Dorsolateral prefrontal cortex (tissue), 120 donors: ENCODE measurements at regions of chr15 and their contacts with region 1.

Region 1: GRCh38 chr15:74835307-74835823 is 7.6 kb downstream of the ULK3 start:
- DNase-seq: peak in 3 of 10 donors; percentile 33 to 62 (median 34)
- H3K4me3 ChIP-seq: no peak overlapping the region
- H3K27ac ChIP-seq: no peak overlapping the region
- H3K27me3 ChIP-seq: no peaks in the 10 kb centered on the region
- CTCF ChIP-seq: peak; percentile 26 to 77 (median 64)

Region 2: GRCh38 chr15:74620636-74621545 is 214.5 kb before region 1 on chr15:
- intact Hi-C with region 1: loop called in 1 of 2 experiments (anchors 10 kb)
- DNase-seq: peak; percentile 50 to 84 (median 74)
- H3K4me3 ChIP-seq: peak overlapping the region in 26 of 59 donors; percentile 1 to 43 (median 21)
- H3K27ac ChIP-seq: peak overlapping the region in 37 of 59 donors; percentile 3 to 76 (median 54)
- H3K27me3 ChIP-seq: no peaks in the 10 kb centered on the region
- CTCF ChIP-seq: peak; percentile 37 to 90 (median 79)

Region 3: DNA sequence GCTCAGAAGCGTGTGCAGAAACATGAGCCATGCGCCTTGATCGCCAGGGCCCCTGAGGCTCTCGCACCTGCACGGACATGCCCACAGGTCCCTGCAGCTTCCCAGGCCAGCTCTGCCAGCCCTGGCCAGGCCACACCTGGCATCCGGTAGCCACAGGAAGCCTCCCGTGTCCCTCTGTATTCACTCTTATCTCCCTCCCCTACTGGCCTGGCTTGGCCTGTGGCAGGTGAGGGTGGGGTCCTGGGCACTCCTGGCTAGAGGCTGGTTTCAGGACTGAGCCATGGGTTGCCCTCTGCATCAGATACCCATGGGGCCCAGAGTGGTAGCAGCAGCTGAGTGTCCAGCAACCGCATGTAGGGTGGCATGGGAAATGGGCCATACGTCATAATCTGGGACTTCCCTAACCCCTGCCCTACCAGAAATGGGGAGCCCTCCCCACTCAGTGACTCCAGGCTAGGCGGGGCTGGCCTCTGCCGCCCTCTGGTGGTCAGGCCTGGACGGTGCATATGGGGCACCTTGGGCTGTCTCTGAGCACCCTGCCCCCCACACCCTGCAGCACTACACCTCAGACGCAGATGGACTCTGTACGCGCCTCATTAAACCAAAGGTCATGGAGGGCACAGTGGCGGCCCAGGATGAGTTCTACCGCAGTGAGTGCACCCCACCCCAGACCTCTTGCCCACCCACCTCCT is 35.4 kb before region 1 on chr15:
- intact Hi-C with region 1: loop called in 1 of 2 experiments (anchors 5 kb)
- DNase-seq: peak in 7 of 10 donors; percentile 48 to 81 (median 69)
- H3K4me3 ChIP-seq: no peak overlapping the region
- H3K27ac ChIP-seq: peak overlapping the region in 32 of 59 donors; percentile 2 to 70 (median 39)
- H3K27me3 ChIP-seq: no peaks in the 10 kb centered on the region
- CTCF ChIP-seq: peak; percentile 68 to 98 (median 94)